MCF 10A (cell line): ENCODE measurements at regions of chr9 and their contacts with region 1.

Region 1: DNA sequence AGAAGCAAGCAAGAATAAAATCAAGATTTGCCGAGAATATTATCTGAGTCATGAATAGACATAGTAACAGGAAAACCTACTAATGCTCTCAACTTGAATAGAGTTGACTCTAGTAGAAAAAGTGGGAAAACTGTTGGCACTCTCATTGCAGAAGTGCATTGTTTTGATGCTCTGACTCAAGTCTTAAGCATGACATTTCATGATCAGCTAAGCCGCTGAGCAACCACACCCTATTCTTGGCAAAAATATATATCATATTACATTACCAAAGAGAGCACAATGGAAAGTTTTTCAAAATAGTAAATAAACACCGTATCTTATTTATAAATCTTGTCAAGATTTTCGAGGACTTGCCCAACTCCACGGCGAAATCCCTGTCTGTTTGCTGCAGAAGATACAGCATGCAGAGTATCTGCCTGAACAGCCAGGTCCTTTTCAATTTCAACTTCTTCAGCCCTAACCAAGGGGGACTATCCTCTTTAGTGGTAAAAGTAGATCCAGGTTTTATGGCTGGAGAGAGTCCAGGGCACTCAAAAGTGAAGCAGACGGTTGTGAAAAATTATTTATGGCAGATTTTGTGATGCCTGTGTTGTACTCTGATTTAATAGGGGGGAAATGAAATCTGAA is 13.9 kb upstream of the ADAMTSL1 start:
- DNase-seq: peak; percentile 94
- H3K4me3 Mint-ChIP-seq: peak overlapping the region; percentile 13
- H3K27ac Mint-ChIP-seq: peak overlapping the region; percentile 84
- H3K4me1 Mint-ChIP-seq: peaks cover 31% of the 10 kb centered on the region
- H3K27me3 Mint-ChIP-seq: no peaks in the 10 kb centered on the region
- CTCF ChIP-seq: no peak

Region 2: GRCh38 chr9:18183974-18184373 is 276.1 kb before region 1 on chr9:
- CTCF ChIA-PET with region 1: no interaction called
- POLR2A ChIA-PET with region 1: no interaction called
- intact Hi-C with region 1: no loop called
- DNase-seq: no peak
- H3K4me3 Mint-ChIP-seq: no peak overlapping the region
- H3K27ac Mint-ChIP-seq: no peak overlapping the region
- H3K4me1 Mint-ChIP-seq: peaks cover 13% of the 10 kb centered on the region
- H3K27me3 Mint-ChIP-seq: no peaks in the 10 kb centered on the region
- CTCF ChIP-seq: no peak

Region 3: GRCh38 chr9:18393340-18394130 is 66.5 kb before region 1 on chr9:
- CTCF ChIA-PET with region 1: no interaction called
- POLR2A ChIA-PET with region 1: no interaction called
- intact Hi-C with region 1: loop called (anchors 1 kb)
- DNase-seq: peak; percentile 99
- H3K4me3 Mint-ChIP-seq: peak overlapping the region; percentile 47
- H3K27ac Mint-ChIP-seq: peak overlapping the region; percentile 95
- H3K4me1 Mint-ChIP-seq: peaks cover 24% of the 10 kb centered on the region
- H3K27me3 Mint-ChIP-seq: no peaks in the 10 kb centered on the region
- CTCF ChIP-seq: no peak

Region 4: DNA sequence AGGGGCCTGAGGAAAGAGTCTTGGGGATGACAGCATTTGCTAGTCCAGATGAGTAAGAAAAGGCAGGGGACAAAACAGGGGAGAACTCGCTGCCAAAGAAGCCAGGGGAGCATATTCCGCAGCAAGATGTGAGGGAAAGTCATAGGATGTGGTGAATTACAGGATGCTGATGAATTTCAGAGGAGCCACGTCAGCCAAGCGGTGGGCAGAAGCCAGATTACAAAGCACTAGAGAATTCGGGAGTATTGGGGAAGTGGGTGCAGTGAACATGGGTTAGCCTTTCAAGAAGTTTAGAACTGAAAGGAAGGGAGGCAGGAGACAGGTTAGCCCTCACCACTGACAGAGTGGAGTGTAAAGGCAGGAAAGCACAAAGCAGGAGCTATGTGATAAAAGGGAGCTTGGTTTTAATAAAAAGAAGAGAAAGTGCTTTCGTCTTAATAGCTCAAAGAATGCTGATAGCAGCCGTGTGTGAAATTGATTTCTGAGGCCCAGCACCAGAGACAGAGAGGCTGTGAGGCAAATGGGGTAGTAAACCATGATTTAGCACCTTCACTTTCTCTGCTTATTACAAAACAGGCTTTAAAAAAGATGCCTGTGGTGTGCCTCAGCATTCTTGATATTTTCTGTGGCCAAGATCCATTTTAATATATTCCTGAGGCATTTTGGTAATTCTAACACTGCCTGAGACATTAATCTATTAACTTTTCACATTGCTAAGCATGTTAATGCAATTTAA is 30.7 kb after region 1 on chr9:
- CTCF ChIA-PET with region 1: interaction called, 3 read pairs
- POLR2A ChIA-PET with region 1: interaction called, 4 read pairs
- intact Hi-C with region 1: loop called (anchors 2 kb)
- DNase-seq: peak; percentile 89
- H3K4me3 Mint-ChIP-seq: no peak overlapping the region
- H3K27ac Mint-ChIP-seq: no peak overlapping the region
- H3K4me1 Mint-ChIP-seq: peaks cover 22% of the 10 kb centered on the region
- H3K27me3 Mint-ChIP-seq: no peaks in the 10 kb centered on the region
- CTCF ChIP-seq: no peak

Region 5: GRCh38 chr9:18941060-18941740 is 481.1 kb after region 1 on chr9:
- CTCF ChIA-PET with region 1: no interaction called
- POLR2A ChIA-PET with region 1: no interaction called
- intact Hi-C with region 1: no loop called
- DNase-seq: no peak
- H3K4me3 Mint-ChIP-seq: no peak overlapping the region
- H3K27ac Mint-ChIP-seq: no peak overlapping the region
- H3K4me1 Mint-ChIP-seq: no peaks in the 10 kb centered on the region
- H3K27me3 Mint-ChIP-seq: peaks cover 14% of the 10 kb centered on the region
- CTCF ChIP-seq: no peak